PC-3 (cell line): ENCODE measurements at regions of chr5 and their contacts with region 1.

Region 1: DNA sequence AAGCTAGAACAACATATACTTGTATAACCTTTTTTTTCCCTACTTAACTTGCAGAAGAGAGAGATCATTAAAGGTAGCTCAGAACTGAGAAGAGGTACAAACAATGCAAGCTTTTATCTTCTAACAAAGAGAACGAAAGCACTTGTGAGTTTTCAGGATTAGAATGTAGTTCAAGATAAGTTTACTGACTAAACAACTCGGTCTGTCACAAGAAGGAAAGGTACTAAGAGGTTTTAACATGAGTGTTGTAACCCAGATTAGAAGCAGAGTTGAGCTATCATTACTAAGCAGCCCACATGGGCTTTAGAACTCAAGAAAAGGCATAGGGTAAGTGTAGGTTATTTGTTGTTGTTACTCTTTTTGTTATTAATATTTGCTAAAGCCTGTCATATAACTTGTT is 25.2 kb downstream of the GIN1 start:
- DNase-seq: no peak
- ATAC-seq: no peak
- H3K4me3 ChIP-seq: no peak overlapping the region
- H3K27ac ChIP-seq: no peak overlapping the region
- H3K4me1 ChIP-seq: no peaks in the 10 kb centered on the region
- H3K27me3 ChIP-seq: no peaks in the 10 kb centered on the region
- CTCF ChIP-seq: no peak

Region 2: DNA sequence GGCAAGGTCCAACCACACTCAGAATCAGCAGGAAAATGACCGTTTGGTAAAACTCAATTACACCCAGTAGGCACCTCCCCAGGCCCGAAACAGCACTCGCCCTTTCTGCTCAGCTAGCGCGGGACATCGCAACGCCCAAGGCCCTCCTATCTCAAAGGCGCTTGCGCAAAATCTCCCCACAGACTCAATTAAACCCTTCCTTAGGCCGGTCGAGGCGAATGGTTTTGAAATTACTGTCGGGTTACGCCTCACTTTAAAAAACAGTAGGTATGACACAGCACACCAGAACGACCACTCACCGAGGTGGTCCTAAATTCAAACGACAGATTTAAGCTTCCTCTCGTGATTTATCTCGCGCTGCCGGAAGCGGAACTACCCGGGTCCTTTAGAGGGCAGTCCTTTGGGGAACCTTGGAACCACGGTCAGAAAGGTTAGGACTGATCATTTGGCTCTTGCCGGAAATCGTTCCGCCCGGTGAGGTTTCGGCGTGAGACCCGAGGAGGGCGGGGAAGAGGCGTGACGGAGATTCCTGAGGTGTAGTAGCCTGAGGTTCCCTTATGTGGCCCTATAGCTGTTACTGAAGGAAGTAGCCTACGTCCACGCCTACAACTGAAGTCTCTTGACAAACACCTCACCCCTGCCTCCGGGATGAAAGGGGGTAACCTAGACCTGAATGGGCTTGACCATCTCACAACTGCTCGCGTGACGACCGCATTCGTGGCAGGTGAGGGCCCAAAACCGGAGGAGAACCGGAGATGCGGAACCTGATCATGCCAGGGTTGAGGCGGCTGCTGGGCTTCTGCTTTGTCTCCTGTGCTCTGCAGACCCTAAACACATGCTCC is 25.2 kb after region 1 on chr5 and contains the starts of genes GIN1 and PPIP5K2:
- CTCF ChIA-PET with region 1: no interaction called
- POLR2A ChIA-PET with region 1: interaction called, 16 read pairs
- intact Hi-C with region 1: no loop called
- DNase-seq: peak; percentile 100
- ATAC-seq: peak; percentile 89
- H3K4me3 ChIP-seq: peak within 1 kb of the TSS; percentile 90
- H3K27ac ChIP-seq: peak within 1 kb of the TSS; percentile 92
- H3K4me1 ChIP-seq: peaks cover 32% of the 10 kb centered on the region
- H3K27me3 ChIP-seq: no peaks in the 10 kb centered on the region
- CTCF ChIP-seq: no peak
- total RNA-seq, gene GIN1: 3.9 and 6.2 TPM in 2 replicates
- total RNA-seq, gene PPIP5K2: 40.4 and 52.2 TPM in 2 replicates

Region 3: GRCh38 chr5:103139264-103139865 is 44.6 kb after region 1 on chr5:
- CTCF ChIA-PET with region 1: no interaction called
- POLR2A ChIA-PET with region 1: no interaction called
- intact Hi-C with region 1: no loop called
- DNase-seq: peak; percentile 91
- ATAC-seq: peak; percentile 100
- H3K4me3 ChIP-seq: no peak overlapping the region
- H3K27ac ChIP-seq: no peak overlapping the region
- H3K4me1 ChIP-seq: no peaks in the 10 kb centered on the region
- H3K27me3 ChIP-seq: no peaks in the 10 kb centered on the region
- CTCF ChIP-seq: peak; percentile 100